PC-9 (cell line): ENCODE measurements at regions of chr1 and their contacts with region 1.

Region 1: GRCh38 chr1:228198977-228199590 is 8.8 kb upstream of the OBSCN start:
- DNase-seq: peak in 1 of 2 experiments; percentile 43
- H3K4me3 ChIP-seq: no peak overlapping the region
- H3K27ac ChIP-seq: no peak overlapping the region
- H3K4me1 ChIP-seq: no peaks in the 10 kb centered on the region
- H3K27me3 ChIP-seq: no peaks in the 10 kb centered on the region
- CTCF ChIP-seq: no peak

Region 2: GRCh38 chr1:227489572-227489971 is 709.5 kb before region 1 on chr1:
- CTCF ChIA-PET with region 1: no interaction called
- POLR2A ChIA-PET with region 1: interaction called, 10 read pairs
- intact Hi-C with region 1: no loop called
- DNase-seq: no peak
- H3K4me3 ChIP-seq: no peak overlapping the region
- H3K27ac ChIP-seq: no peak overlapping the region
- H3K4me1 ChIP-seq: no peaks in the 10 kb centered on the region
- H3K27me3 ChIP-seq: no peaks in the 10 kb centered on the region
- CTCF ChIP-seq: no peak

Region 3: GRCh38 chr1:227946624-227947385 is 252.3 kb before region 1 on chr1:
- CTCF ChIA-PET with region 1: no interaction called
- POLR2A ChIA-PET with region 1: no interaction called
- intact Hi-C with region 1: no loop called
- DNase-seq: peak; percentile 70 to 97
- H3K4me3 ChIP-seq: peak overlapping the region; percentile 64
- H3K27ac ChIP-seq: peak overlapping the region; percentile 62
- H3K4me1 ChIP-seq: peaks cover 23% of the 10 kb centered on the region
- H3K27me3 ChIP-seq: no peaks in the 10 kb centered on the region
- CTCF ChIP-seq: peak; percentile 81

Region 4: DNA sequence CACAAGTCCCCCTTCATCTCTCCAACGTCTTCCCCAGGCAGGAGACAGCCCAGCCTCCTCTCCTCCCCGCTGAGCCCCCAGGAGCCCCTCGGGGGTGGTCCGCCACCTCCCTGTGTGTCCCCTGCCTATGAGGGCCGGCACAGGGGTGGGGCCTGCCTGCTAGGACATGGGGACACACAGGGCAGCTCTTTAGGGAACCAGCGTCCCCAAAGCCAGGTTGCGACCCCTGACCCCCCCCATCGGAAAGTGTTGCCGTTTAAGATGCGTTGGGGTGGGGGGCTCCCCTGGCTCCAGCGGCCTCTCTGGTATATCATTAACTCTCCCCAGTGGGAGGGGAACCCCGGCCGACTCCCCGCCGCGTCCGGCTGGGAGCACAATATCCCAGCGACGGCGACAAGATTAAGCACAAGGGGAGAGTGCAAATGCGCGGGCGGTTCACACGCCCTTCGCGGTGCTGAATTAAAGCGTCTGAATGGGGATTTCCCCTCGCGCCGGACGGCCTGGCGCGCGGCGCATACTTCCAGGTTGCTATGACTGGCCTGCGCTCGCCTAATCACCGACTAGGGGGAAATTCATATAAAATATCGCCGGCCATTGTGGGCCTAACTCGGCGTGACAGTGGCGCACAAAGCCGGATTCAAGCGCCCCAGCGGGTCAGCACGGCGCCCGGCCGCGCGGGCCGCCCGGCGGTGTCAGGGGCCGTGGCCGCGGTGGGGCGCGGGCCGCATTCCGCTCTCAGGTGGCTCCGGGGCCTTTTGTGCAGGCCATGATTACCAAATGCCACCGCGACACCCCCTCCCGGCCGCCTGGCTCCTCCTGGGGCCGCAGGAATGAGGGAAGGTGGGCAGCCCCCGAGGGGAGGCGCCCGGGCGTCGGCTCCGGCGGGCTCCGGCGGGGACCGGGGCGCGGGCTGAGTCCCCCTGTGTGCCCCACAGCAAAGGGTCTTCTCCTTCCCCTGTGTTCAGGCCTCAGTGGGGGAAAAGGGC is 161.4 kb before region 1 on chr1:
- CTCF ChIA-PET with region 1: no interaction called
- POLR2A ChIA-PET with region 1: no interaction called
- intact Hi-C with region 1: no loop called
- DNase-seq: peak in 1 of 2 experiments; percentile 35
- H3K4me3 ChIP-seq: no peak overlapping the region
- H3K27ac ChIP-seq: no peak overlapping the region
- H3K4me1 ChIP-seq: peaks cover 3% of the 10 kb centered on the region
- H3K27me3 ChIP-seq: no peaks in the 10 kb centered on the region
- CTCF ChIP-seq: no peak

Region 5: GRCh38 chr1:228149341-228150119 is 49.6 kb before region 1 on chr1 and contains the start of gene GJC2:
- CTCF ChIA-PET with region 1: no interaction called
- POLR2A ChIA-PET with region 1: interaction called, 10 read pairs
- intact Hi-C with region 1: no loop called
- DNase-seq: peak in 1 of 2 experiments; percentile 77
- H3K4me3 ChIP-seq: no peak within 1 kb of the TSS
- H3K27ac ChIP-seq: no peak within 1 kb of the TSS
- H3K4me1 ChIP-seq: no peaks in the 10 kb centered on the region
- H3K27me3 ChIP-seq: no peaks in the 10 kb centered on the region
- CTCF ChIP-seq: no peak
- total RNA-seq, gene GJC2: 2.1 and 3.4 TPM in 2 replicates

Region 6: DNA sequence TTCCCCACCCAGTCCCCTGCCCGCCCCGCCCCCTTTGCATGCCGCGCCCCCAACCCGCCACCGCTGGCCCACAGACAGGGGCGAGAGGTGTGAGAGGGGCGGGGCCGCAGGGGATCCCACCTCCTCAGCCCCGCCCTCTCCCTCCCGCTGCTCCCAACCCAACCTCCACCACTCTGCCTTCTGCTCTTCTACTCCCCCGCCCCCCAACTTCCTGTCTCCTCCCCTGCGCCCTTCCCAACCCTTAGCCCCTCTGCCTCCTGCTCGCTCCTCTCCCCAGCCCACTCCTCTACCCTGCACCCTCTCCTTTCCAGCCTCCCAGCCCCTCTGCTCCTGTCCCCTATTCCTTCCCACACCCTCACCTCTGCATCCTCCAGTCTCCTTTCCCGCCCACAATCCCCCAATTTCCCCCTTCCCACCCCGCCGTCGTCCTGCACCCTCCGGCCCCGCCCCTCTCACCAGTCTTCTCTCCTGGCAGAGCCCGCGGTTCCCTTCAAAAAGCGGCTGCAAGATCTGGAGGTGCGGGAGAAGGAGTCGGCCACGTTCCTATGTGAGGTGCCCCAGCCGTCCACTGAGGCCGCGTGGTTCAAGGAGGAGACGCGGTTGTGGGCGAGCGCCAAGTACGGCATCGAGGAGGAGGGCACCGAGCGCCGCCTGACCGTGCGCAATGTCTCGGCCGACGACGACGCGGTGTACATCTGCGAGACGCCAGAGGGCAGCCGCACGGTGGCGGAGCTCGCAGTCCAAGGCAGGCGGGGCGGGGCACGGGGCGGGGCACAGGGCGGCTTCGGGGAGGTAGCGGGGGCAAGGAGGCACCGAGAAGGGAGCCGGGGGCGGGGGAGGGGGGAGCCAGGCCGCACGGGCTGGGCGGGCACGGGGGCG is 14.1 kb after region 1 on chr1:
- CTCF ChIA-PET with region 1: no interaction called
- POLR2A ChIA-PET with region 1: no interaction called
- intact Hi-C with region 1: no loop called
- DNase-seq: peak; percentile 71 to 88
- H3K4me3 ChIP-seq: peak overlapping the region; percentile 62
- H3K27ac ChIP-seq: no peak overlapping the region
- H3K4me1 ChIP-seq: peaks cover 9% of the 10 kb centered on the region
- H3K27me3 ChIP-seq: no peaks in the 10 kb centered on the region
- CTCF ChIP-seq: peak; percentile 60